ENCODE measurements at regions of chr18 and their contacts with region 1.

Region 1: GRCh38 chr18:34901299-34901698 is 139.9 kb upstream of the MAPRE2 start:
- DNase-seq: no peak
- H3K4me3 Mint-ChIP-seq: no peak overlapping the region
- H3K27ac Mint-ChIP-seq: no peak overlapping the region
- H3K4me1 Mint-ChIP-seq: peaks cover 9% of the 10 kb centered on the region
- H3K27me3 Mint-ChIP-seq: no peaks in the 10 kb centered on the region

Region 2: DNA sequence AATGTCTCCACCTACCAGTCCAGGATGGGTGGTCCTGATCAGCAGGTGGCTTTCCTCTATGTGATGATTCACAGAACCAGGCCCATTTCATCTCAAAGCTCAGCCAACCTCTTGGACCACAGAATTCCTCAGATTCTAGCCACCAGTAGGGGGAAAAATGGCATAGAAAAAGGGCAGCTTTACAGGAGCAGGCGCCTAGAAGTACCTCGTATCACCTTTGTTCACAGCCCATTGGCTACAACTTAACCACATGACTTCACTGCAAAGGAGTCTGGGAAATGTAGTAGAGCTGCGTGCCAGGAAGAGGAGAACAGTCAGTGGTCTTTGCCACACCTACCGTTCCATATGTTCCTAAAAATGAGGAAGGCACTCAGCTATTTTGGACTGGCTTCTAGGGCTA is 254.0 kb before region 1 on chr18:
- CTCF ChIA-PET with region 1: no interaction called
- intact Hi-C with region 1: no loop called
- DNase-seq: no peak
- H3K4me3 Mint-ChIP-seq: no peak overlapping the region
- H3K27ac Mint-ChIP-seq: no peak overlapping the region
- H3K4me1 Mint-ChIP-seq: no peaks in the 10 kb centered on the region
- H3K27me3 Mint-ChIP-seq: peaks cover 13% of the 10 kb centered on the region

Region 3: GRCh38 chr18:34661464-34662111 is 239.7 kb before region 1 on chr18:
- CTCF ChIA-PET with region 1: no interaction called
- intact Hi-C with region 1: loop called (anchors 2 kb)
- DNase-seq: no peak
- H3K4me3 Mint-ChIP-seq: no peak overlapping the region
- H3K27ac Mint-ChIP-seq: no peak overlapping the region
- H3K4me1 Mint-ChIP-seq: no peaks in the 10 kb centered on the region
- H3K27me3 Mint-ChIP-seq: peaks cover 16% of the 10 kb centered on the region

Region 4: GRCh38 chr18:34729264-34729663 is 172.0 kb before region 1 on chr18:
- CTCF ChIA-PET with region 1: no interaction called
- intact Hi-C with region 1: loop called (anchors 5 kb)
- DNase-seq: peak; percentile 9
- H3K4me3 Mint-ChIP-seq: no peak overlapping the region
- H3K27ac Mint-ChIP-seq: no peak overlapping the region
- H3K4me1 Mint-ChIP-seq: peaks cover 3% of the 10 kb centered on the region
- H3K27me3 Mint-ChIP-seq: peaks cover 10% of the 10 kb centered on the region

Region 5: DNA sequence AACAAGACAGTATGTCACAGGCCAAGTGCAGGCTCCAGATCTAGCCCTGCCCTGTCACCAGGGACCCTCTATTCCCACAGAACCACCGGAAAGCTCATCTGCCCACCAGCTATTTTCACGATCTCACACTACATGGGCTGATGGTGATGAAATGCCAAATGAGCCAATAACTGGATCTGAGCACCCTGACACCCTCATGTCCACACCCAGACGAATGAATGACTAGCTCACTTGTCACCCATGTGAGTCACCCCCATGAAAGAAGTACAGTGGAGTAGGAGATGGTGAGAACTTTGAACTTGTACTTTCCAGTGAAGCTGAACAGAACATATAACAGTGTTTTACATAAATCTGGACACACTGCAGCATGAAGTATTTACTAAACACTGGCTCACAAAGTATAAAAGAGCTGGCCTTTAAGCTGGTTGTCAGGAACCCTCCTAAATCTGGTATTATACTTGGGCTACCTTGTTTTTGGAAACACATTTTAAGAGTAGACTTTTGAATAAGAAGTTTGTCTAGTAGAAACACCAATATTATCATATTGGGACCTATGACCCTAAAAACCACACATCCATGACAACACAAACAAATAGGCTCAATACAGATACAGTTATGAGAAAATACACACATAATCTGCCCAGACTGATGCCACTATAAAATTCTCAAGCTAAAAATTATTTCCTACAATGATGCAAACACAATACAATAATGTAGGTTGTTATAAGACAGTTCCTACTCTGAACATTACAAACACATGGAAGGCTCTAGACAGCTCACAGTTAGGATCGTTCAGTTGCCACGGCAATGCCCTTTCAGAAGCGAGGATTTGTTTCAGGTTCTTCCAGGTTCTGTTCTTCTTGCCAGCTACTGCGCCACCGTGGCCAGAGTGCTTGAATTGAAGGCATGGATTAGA is 577.5 kb after region 1 on chr18:
- CTCF ChIA-PET with region 1: no interaction called
- intact Hi-C with region 1: no loop called
- DNase-seq: peak; percentile 68
- H3K4me3 Mint-ChIP-seq: peak overlapping the region; percentile 0
- H3K27ac Mint-ChIP-seq: peak overlapping the region; percentile 9
- H3K4me1 Mint-ChIP-seq: peaks cover 43% of the 10 kb centered on the region
- H3K27me3 Mint-ChIP-seq: no peaks in the 10 kb centered on the region

Measured in activated naive CD4-positive, alpha-beta T cell treated with anti-CD3 and anti-CD28 coated beads for 36 hours (primary cell).